Right cardiac atrium (tissue), 5 donors: ENCODE measurements at regions of chr11 and their contacts with region 1.

Region 1: GRCh38 chr11:63635762-63636465 is 21.7 kb upstream of the PLAAT3 start:
- DNase-seq: peak; percentile 39 to 72 (median 67)
- ATAC-seq: peak; percentile 76 to 81
- H3K4me3 ChIP-seq: no peak overlapping the region
- H3K27ac ChIP-seq: no peak overlapping the region
- H3K4me1 ChIP-seq: no peaks in the 10 kb centered on the region
- H3K27me3 ChIP-seq: no peaks in the 10 kb centered on the region

Region 2: GRCh38 chr11:63478896-63479295 is 157.0 kb before region 1 on chr11:
- intact Hi-C with region 1: loop called (anchors 2 to 5 kb)
- DNase-seq: no peak
- ATAC-seq: peak; percentile 80 to 92
- H3K4me3 ChIP-seq: no peak overlapping the region
- H3K27ac ChIP-seq: no peak overlapping the region
- H3K4me1 ChIP-seq: no peaks in the 10 kb centered on the region
- H3K27me3 ChIP-seq: no peaks in the 10 kb centered on the region